A549 (cell line): ENCODE measurements at regions of chr20 and their contacts with region 1.

Region 1: GRCh38 chr20:57383447-57384347 is 7.5 kb upstream of the RBM38 start:
- DNase-seq: no peak
- ATAC-seq: no peak
- H3K4me3 ChIP-seq: no peak overlapping the region
- H3K27ac ChIP-seq: no peak overlapping the region
- H3K4me1 ChIP-seq: no peaks in the 10 kb centered on the region
- CTCF ChIP-seq: no peak
- EP300 ChIP-seq: no peak
- POLR2A ChIP-seq: no peak
- RAD21 ChIP-seq: no peak

Region 2: GRCh38 chr20:57361212-57361915 is 22.3 kb before region 1 on chr20:
- CTCF ChIA-PET with region 1: interaction called, 11 read pairs
- POLR2A ChIA-PET with region 1: no interaction called
- DNase-seq: no peak
- ATAC-seq: peak in 1 of 2 experiments; percentile 43; a peak in 1 of 6 replicates
- H3K4me3 ChIP-seq: no peak overlapping the region
- H3K27ac ChIP-seq: no peak overlapping the region
- H3K4me1 ChIP-seq: no peaks in the 10 kb centered on the region; the same call in 1 of the 3 replicates
- CTCF ChIP-seq: no peak
- EP300 ChIP-seq: no peak
- POLR2A ChIP-seq: no peak
- RAD21 ChIP-seq: no peak

Region 3: DNA sequence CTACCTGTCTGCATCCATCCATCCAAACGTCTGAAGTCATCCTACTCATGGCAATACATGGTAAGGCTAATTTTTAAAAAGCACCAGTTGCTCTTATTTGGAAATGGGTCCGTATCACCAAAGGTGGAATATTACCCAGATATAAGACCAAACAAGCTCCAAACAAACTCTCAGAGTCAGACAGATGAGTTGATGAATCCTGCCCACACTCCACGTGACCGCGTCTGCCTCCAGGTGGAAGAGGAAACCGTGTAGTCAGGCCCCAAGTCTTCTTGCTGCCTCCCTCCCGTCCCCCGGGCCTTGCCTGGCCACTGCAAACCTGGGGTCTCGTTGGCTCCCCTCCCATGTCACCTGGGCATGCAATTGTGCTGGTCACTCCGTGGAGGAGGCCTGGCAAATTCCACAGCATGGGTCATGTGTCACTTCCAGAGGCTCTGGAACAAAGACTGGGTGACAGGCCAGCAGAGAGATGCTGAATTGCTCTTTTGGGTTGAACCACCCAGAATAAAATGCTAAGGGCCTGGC is 109.5 kb after region 1 on chr20:
- CTCF ChIA-PET with region 1: interaction called, 97 read pairs
- POLR2A ChIA-PET with region 1: no interaction called
- DNase-seq: no peak
- ATAC-seq: no peak
- H3K4me3 ChIP-seq: no peak overlapping the region
- H3K27ac ChIP-seq: no peak overlapping the region
- H3K4me1 ChIP-seq: no peaks in the 10 kb centered on the region
- CTCF ChIP-seq: no peak
- EP300 ChIP-seq: no peak
- POLR2A ChIP-seq: no peak
- RAD21 ChIP-seq: no peak

Region 4: DNA sequence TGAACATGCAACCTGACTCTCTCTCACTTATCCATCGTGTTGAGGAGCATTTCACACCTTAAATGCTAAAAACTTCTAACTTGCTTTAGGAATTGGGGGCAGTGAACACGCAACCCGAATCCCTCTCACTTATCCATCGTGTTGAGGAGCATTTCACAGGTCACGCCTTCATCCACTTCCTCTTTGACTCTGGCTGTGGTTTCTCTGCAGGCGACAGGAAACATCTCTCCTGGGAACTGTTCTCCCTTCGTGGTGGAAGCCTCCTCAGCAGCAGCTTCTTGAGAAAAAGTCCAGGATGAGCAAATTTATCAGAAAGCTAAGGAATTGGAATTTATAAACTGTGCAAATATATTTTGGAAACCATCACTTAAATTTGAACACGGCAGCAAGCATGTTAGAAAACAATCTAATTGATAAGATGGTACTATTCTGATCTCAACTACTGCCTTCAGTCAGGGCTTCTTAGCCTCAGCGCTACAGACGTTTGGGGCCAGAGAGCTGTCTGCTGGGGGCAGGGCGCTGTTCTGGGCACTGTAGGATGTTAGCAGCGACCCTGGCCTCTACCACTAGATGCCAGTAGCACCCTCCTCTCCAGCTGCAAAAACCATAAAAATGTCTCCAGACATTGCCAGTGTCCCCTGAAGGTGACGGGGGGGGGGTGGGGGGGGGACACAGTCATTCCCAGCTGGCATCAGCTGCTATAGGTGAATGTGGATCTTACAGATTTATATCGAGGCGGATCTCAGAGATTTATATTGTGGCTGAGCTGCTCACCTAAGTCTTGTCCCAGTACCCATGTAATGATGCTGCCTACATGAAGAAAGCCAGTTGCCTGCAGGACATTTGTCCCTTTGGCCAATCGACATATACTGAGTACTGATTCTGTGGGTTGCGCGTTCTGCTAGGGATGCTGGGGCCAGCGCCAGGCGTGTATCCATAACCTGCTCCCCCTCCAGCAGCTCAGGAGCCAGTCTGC is 115.0 kb after region 1 on chr20:
- CTCF ChIA-PET with region 1: interaction called, 97 read pairs
- POLR2A ChIA-PET with region 1: no interaction called
- DNase-seq: peak in 1 of 2 experiments; percentile 40
- ATAC-seq: peak; percentile 84 to 89
- H3K4me3 ChIP-seq: no peak overlapping the region
- H3K27ac ChIP-seq: no peak overlapping the region
- H3K4me1 ChIP-seq: no peaks in the 10 kb centered on the region
- CTCF ChIP-seq: peak; percentile 45
- EP300 ChIP-seq: no peak
- POLR2A ChIP-seq: no peak
- RAD21 ChIP-seq: peak; percentile 54 to 56